Vagina (tissue), 2 donors: ENCODE measurements at regions of chr3 and their contacts with region 1.

Region 1: GRCh38 chr3:124351430-124352148 is 359.7 kb upstream of the ROPN1 start:
- DNase-seq: no peak
- H3K4me3 ChIP-seq: no peak overlapping the region
- H3K27ac ChIP-seq: no peak overlapping the region
- H3K4me1 ChIP-seq: no peaks in the 10 kb centered on the region
- H3K27me3 ChIP-seq: no peaks in the 10 kb centered on the region
- CTCF ChIP-seq: peak in 2 of 3 experiments; percentile 9 to 67
- POLR2A ChIP-seq: no peak

Region 2: DNA sequence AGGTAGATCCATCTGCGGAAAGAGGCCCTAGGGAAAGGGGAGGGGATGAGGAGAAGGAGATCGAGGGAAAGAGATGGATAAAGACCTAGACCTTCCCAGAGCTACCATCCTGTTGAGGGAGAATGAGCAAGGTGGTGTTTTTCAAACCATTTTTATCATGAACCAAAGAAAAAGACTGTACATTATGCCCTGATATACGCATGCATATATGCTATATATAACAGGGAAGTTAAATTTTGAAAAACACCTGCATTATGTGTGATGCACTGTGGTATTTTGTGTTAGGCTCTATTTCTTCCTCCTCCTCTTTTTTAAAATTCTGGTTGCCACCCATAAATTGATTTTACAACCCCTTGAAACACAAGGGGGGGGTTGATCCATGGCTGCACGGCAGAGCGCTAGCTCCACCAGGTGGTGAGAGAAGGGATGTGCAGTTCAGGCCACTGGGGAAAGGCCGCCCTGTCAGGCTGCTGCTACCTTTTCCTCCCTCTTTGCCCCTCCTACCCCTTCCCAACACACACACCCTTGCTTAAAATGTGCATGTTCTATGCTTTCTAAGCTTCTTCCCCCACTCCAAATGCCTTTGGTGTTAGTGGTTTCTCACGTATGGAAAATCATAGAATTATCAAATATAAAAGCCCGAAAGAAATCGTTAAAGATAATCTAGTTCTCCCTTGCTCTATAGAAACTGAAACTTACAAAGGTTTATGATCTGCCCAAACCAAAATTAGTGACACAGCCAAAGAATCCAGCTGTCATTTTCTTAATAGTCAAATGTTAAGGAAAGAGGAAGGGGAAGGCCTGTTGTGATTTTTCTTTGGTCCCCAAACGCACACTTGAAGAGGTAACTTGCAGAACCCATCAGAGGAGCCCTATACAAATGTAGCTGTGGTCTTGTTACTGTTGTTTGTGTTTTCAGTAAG is 116.7 kb after region 1 on chr3:
- intact Hi-C with region 1: loop called (anchors 5 kb)
- DNase-seq: no peak
- H3K4me3 ChIP-seq: no peak overlapping the region
- H3K27ac ChIP-seq: no peak overlapping the region
- H3K4me1 ChIP-seq: no peaks in the 10 kb centered on the region
- H3K27me3 ChIP-seq: no peaks in the 10 kb centered on the region
- CTCF ChIP-seq: peak; percentile 60 to 77 (median 73)
- POLR2A ChIP-seq: no peak